ENCODE measurements at regions of chr13 and their contacts with region 1.

Region 1: GRCh38 chr13:78241278-78241919 is 322.8 kb upstream of the EDNRB start:
- DNase-seq: peak in 3 of 5 donors; percentile 13 to 52 (median 16)
- ATAC-seq: no peak
- H3K4me3 ChIP-seq: no peak overlapping the region
- H3K27ac ChIP-seq: no peak overlapping the region
- H3K4me1 ChIP-seq: no peaks in the 10 kb centered on the region
- H3K27me3 ChIP-seq: no peaks in the 10 kb centered on the region
- CTCF ChIP-seq: peak in 11 of 12 donors; percentile 15 to 59 (median 41)
- POLR2A ChIP-seq: no peak

Region 2: DNA sequence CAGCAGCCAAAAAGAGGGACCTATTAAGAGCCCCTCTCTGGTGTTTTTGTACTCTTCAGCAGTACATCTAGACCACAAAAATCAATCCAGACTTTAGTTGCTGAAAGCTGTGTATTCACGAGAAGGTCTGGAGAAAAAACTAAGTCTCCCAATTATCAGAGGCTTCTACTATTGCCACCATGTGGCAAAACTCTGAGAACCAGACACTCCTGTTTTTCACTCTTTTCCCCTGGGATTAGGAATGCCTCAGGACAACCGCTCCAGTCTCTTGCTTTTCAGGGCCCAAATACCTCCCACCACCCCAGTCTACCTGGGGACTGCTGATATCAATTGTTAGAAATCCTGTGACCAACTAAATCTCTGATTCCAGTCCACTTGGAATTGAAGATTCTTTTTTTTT is 447.6 kb after region 1 on chr13:
- intact Hi-C with region 1: loop called in 4 of 10 experiments (anchors 5 to 10 kb)
- DNase-seq: no peak
- ATAC-seq: peak in 1 of 4 donors; percentile 36
- H3K4me3 ChIP-seq: no peak overlapping the region
- H3K27ac ChIP-seq: no peak overlapping the region
- H3K4me1 ChIP-seq: no peaks in the 10 kb centered on the region
- H3K27me3 ChIP-seq: peaks cover 0 to 12% (median 0%) of the 10 kb centered on the region in 9 donors
- CTCF ChIP-seq: peak in 8 of 12 donors; percentile 19 to 44 (median 26)
- POLR2A ChIP-seq: no peak

Region 3: DNA sequence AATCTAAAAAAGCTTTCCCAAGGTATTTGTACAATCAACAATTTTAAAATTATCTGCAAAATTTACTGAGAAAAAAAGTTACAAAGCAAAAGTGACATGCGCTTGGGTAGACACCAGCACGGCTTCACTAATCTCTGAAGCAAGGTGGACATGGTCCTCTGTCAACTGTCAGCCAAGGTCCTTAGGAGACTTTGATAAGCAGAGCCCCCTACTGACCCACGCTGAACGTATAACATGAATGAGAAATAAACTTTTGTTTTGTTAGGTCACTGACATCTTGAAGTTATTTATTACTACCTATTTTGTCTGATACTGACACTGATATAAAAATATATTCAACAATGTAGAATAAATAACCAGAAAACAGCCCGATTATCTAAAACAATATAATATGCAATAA is 518.3 kb after region 1 on chr13:
- intact Hi-C with region 1: loop called in 1 of 10 experiments (anchors 10 kb)
- DNase-seq: no peak
- ATAC-seq: no peak
- H3K4me3 ChIP-seq: no peak overlapping the region
- H3K27ac ChIP-seq: no peak overlapping the region
- H3K4me1 ChIP-seq: no peaks in the 10 kb centered on the region
- H3K27me3 ChIP-seq: peaks cover 0 to 7% (median 0%) of the 10 kb centered on the region in 9 donors
- CTCF ChIP-seq: no peak
- POLR2A ChIP-seq: no peak

Measured in heart left ventricle (tissue), 16 donors.